Caco-2 (cell line): ENCODE measurements at regions of chr3 and their contacts with region 1.

Region 1: GRCh38 chr3:35484929-35485530 is 154.3 kb upstream of the ARPP21 start:
- DNase-seq: no peak
- H3K4me3 ChIP-seq: no peak overlapping the region
- H3K4me3 Mint-ChIP-seq: no peak overlapping the region
- H3K27ac Mint-ChIP-seq: no peak overlapping the region
- H3K4me1 ChIP-seq: no peaks in the 10 kb centered on the region
- H3K4me1 Mint-ChIP-seq: peaks cover 7% of the 10 kb centered on the region
- H3K27me3 ChIP-seq: no peaks in the 10 kb centered on the region
- H3K27me3 Mint-ChIP-seq: peaks cover 4% of the 10 kb centered on the region
- CTCF ChIP-seq: no peak

Region 2: DNA sequence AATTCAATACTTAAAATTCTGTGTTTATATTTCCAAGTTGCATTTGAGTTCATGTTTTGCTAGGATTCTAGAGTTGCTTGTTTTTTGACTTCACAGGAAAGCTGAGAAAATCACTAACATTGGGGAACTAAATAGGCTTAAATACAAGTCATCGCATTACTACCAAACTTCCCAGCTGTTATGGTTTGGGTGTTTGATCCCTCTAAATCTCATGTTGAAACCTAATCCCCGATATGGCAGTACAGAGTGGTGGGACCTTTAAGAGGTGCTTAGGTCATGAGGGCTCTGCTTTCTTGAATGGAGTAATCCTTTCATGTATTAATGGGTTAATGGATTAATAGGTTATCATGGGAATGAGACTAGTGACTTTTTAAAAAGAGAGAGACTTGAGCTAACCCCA is 77.1 kb after region 1 on chr3:
- CTCF ChIA-PET with region 1: no interaction called
- POLR2A ChIA-PET with region 1: no interaction called
- intact Hi-C with region 1: no loop called
- DNase-seq: no peak
- H3K4me3 ChIP-seq: no peak overlapping the region
- H3K4me3 Mint-ChIP-seq: no peak overlapping the region
- H3K27ac Mint-ChIP-seq: no peak overlapping the region
- H3K4me1 ChIP-seq: no peaks in the 10 kb centered on the region
- H3K4me1 Mint-ChIP-seq: no peaks in the 10 kb centered on the region
- H3K27me3 ChIP-seq: no peaks in the 10 kb centered on the region
- H3K27me3 Mint-ChIP-seq: no peaks in the 10 kb centered on the region
- CTCF ChIP-seq: no peak

Region 3: GRCh38 chr3:35659768-35660167 is 174.7 kb after region 1 on chr3:
- CTCF ChIA-PET with region 1: no interaction called
- POLR2A ChIA-PET with region 1: no interaction called
- intact Hi-C with region 1: loop called (anchors 1 kb)
- DNase-seq: peak; percentile 14 to 43
- H3K4me3 ChIP-seq: no peak overlapping the region
- H3K4me3 Mint-ChIP-seq: no peak overlapping the region
- H3K27ac Mint-ChIP-seq: no peak overlapping the region
- H3K4me1 ChIP-seq: no peaks in the 10 kb centered on the region
- H3K4me1 Mint-ChIP-seq: no peaks in the 10 kb centered on the region
- H3K27me3 ChIP-seq: no peaks in the 10 kb centered on the region
- H3K27me3 Mint-ChIP-seq: peaks cover 7% of the 10 kb centered on the region
- CTCF ChIP-seq: peak in 1 of 2 experiments; percentile 47

Region 4: DNA sequence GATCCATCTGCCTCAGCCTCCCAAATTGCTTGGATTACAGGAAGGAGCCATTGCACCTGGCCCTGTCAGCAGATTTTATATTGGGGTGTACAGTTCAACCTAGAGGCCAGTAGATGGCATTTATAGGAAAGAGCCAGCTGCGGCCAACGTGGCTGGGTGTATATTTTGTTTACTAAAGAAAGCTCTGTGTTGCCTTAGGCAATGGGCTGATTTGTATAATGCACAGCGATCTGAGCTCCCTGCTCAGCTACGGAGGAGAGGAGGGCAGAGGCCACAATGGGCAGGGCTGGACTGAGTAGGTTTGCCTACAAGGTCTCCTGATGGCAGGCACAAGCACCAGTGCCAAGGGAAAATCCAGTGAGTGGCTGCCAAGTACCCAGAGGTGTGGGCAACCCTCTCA is 436.7 kb after region 1 on chr3:
- CTCF ChIA-PET with region 1: no interaction called
- POLR2A ChIA-PET with region 1: no interaction called
- intact Hi-C with region 1: loop called (anchors 5 kb)
- DNase-seq: no peak
- H3K4me3 ChIP-seq: no peak overlapping the region
- H3K4me3 Mint-ChIP-seq: no peak overlapping the region
- H3K27ac Mint-ChIP-seq: no peak overlapping the region
- H3K4me1 ChIP-seq: no peaks in the 10 kb centered on the region
- H3K4me1 Mint-ChIP-seq: no peaks in the 10 kb centered on the region
- H3K27me3 ChIP-seq: no peaks in the 10 kb centered on the region
- H3K27me3 Mint-ChIP-seq: no peaks in the 10 kb centered on the region
- CTCF ChIP-seq: no peak